ENCODE measurements at regions of chr16 and their contacts with region 1.

Region 1: DNA sequence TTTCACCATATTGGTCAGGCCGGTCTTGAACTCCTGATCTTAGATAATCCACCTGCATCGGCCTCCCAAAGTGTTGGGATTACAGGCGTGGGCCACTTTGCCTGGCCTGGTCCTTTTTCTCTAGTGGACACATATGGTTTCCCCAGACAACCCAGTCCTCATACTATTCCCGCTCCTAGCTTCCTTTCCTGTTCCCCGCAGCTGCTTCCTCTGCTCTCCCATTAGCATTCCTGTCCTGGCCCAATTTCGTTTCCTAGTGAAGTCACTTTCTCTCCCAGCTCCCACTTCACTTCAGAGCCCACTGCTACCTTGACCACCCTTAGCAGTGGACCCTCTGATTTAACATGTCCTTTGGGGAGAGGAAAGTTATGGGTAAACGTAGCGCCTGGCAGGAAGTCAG is 11.3 kb downstream of the KATNIP start:
- DNase-seq: no peak
- H3K4me3 ChIP-seq: no peak overlapping the region
- H3K27ac ChIP-seq: no peak overlapping the region
- H3K4me1 ChIP-seq: no peaks in the 10 kb centered on the region
- CTCF ChIP-seq: no peak

Region 2: DNA sequence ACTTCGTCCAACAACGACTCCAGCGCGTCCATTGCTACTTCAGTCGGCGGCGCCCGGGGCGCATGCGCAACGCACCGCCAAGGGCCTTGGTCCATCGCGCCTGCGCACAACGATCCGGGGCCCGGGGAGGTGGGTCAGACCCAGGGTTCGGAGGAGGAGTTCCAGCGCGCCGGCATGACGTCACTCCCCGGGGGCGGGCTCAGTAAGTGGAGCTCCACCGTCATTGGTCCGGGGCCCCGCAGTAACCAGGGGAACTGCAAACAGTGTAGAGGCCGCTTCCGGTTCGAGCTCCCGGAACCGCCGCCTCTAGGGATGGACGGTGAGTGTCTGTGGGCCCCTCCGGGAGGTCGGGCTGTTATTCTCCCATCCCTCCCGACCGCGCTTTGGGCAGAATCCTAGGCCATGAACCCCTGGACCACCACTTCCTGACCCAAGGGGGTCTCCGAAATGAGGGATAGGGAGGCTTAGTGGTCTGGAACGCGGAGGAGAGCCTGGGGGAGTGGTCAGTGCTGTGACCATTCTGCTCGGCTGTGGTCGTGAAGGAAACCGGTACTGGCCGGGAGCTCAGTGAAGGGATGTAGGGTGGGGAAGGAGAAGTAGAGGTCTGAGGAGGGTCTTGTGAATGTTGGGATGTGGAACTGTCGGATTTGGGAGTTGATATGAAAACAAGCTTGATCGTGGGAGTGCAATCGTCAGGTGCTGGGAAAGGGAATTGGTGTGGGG is 11.2 kb before region 1 on chr16 and contains the starts of genes GTF3C1 and KATNIP:
- CTCF ChIA-PET with region 1: no interaction called
- POLR2A ChIA-PET with region 1: interaction called, 13 read pairs
- intact Hi-C with region 1: no loop called
- DNase-seq: peak; percentile 99
- H3K4me3 ChIP-seq: peak within 1 kb of the TSS; percentile 94
- H3K27ac ChIP-seq: no peak within 1 kb of the TSS
- H3K4me1 ChIP-seq: peaks cover 16% of the 10 kb centered on the region
- CTCF ChIP-seq: no peak
- total RNA-seq, gene GTF3C1: 47.6 and 48.3 TPM in 2 replicates
- total RNA-seq, gene KATNIP: 9.4 and 11.5 TPM in 2 replicates